ENCODE measurements at regions of chr12 and their contacts with region 1.

Region 1: DNA sequence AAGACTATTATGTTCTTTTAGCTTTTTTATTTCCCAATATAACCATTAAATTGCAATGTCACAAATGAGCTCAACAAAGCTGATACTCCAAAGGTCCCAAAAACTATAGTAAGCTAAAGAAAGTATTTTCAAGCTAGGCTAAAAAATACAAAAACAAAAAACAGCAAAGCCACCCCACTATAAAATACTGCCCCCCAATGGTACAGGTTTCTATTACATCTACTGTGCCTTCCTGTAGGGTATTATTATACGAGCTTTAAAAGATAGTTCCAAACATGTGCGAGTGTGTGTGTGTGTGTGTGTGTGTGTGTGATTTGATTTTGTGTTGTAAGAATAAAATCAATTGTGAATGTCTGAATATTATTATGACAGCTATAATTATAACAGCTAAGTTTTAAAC is 1.1 kb downstream of the IFNG start:
- H3K4me3 ChIP-seq: no peak overlapping the region
- H3K27ac ChIP-seq: no peak overlapping the region
- H3K4me1 ChIP-seq: no peaks in the 10 kb centered on the region
- CTCF ChIP-seq: no peak

Region 2: DNA sequence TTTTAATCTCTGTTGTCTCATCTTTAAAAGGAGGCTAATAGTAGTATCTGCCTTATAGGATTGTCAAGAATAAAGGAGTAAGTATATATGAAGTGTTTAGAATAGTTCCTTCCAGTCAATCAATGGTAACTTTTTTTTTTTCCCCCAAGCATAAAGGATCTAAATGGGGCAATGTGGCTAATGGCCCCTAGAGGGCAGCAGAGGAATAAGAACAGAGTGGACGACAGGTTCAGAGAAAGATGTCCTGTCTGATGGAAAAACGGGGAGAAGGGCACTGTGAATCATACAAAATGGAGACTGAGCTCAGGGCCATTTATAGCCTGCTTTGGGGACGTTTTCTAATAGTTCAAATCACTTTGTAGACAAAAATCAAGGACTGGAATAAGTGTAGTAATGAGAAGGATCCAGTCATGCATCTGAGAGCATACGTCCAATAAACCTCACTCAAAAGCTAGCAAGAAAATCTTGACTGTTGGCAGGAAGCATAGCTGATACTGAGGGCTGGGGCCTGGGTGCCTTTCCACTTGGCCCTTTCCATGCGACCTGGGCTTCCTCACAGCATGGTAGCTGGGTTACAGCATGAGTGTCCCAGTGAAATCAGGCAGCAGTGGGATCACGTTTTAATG is 117.9 kb before region 1 on chr12:
- CTCF ChIA-PET with region 1: interaction called, 20 read pairs
- POLR2A ChIA-PET with region 1: no interaction called
- H3K4me3 ChIP-seq: no peak overlapping the region
- H3K27ac ChIP-seq: no peak overlapping the region
- H3K4me1 ChIP-seq: no peaks in the 10 kb centered on the region
- CTCF ChIP-seq: peak; percentile 68

Region 3: GRCh38 chr12:68113644-68114043 is 44.8 kb before region 1 on chr12:
- CTCF ChIA-PET with region 1: interaction called, 10 read pairs
- POLR2A ChIA-PET with region 1: no interaction called
- H3K4me3 ChIP-seq: no peak overlapping the region
- H3K27ac ChIP-seq: no peak overlapping the region
- H3K4me1 ChIP-seq: no peaks in the 10 kb centered on the region
- CTCF ChIP-seq: no peak

Region 4: GRCh38 chr12:68169213-68169889 is 10.9 kb after region 1 on chr12:
- CTCF ChIA-PET with region 1: interaction called, 18 read pairs
- POLR2A ChIA-PET with region 1: no interaction called
- H3K4me3 ChIP-seq: no peak overlapping the region
- H3K27ac ChIP-seq: no peak overlapping the region
- H3K4me1 ChIP-seq: no peaks in the 10 kb centered on the region
- CTCF ChIP-seq: no peak

Region 5: GRCh38 chr12:68290126-68290525 is 131.7 kb after region 1 on chr12:
- CTCF ChIA-PET with region 1: no interaction called
- POLR2A ChIA-PET with region 1: no interaction called
- H3K4me3 ChIP-seq: no peak overlapping the region
- H3K27ac ChIP-seq: no peak overlapping the region
- H3K4me1 ChIP-seq: peaks cover 5% of the 10 kb centered on the region; the same call in 1 of the 2 replicates
- CTCF ChIP-seq: no peak